MCF 10A (cell line): ENCODE measurements at regions of chr19 and their contacts with region 1.

Region 1: GRCh38 chr19:24033301-24033962 is 53.6 kb upstream of the ZNF254 start:
- DNase-seq: peak; percentile 95
- H3K4me3 Mint-ChIP-seq: peak overlapping the region; percentile 94
- H3K27ac Mint-ChIP-seq: peak overlapping the region; percentile 97
- H3K4me1 Mint-ChIP-seq: peaks cover 8% of the 10 kb centered on the region
- H3K27me3 Mint-ChIP-seq: no peaks in the 10 kb centered on the region
- CTCF ChIP-seq: no peak

Region 2: GRCh38 chr19:23686621-23687423 is 346.6 kb before region 1 on chr19 and contains the start of gene ZNF675:
- CTCF ChIA-PET with region 1: no interaction called
- POLR2A ChIA-PET with region 1: interaction called, 13 read pairs
- intact Hi-C with region 1: no loop called
- DNase-seq: peak; percentile 96
- H3K4me3 Mint-ChIP-seq: peak within 1 kb of the TSS; percentile 98
- H3K27ac Mint-ChIP-seq: peak within 1 kb of the TSS; percentile 97
- H3K4me1 Mint-ChIP-seq: peaks cover 6% of the 10 kb centered on the region
- H3K27me3 Mint-ChIP-seq: no peaks in the 10 kb centered on the region
- CTCF ChIP-seq: no peak
- total RNA-seq, gene ZNF675: 7.9 and 8.8 TPM in 2 replicates

Region 3: GRCh38 chr19:23699082-23699761 is 334.2 kb before region 1 on chr19:
- CTCF ChIA-PET with region 1: no interaction called
- POLR2A ChIA-PET with region 1: interaction called, 13 read pairs
- intact Hi-C with region 1: no loop called
- DNase-seq: peak; percentile 38
- H3K4me3 Mint-ChIP-seq: peak overlapping the region; percentile 53
- H3K27ac Mint-ChIP-seq: peak overlapping the region; percentile 35
- H3K4me1 Mint-ChIP-seq: peaks cover 12% of the 10 kb centered on the region
- H3K27me3 Mint-ChIP-seq: no peaks in the 10 kb centered on the region
- CTCF ChIP-seq: no peak

Region 4: DNA sequence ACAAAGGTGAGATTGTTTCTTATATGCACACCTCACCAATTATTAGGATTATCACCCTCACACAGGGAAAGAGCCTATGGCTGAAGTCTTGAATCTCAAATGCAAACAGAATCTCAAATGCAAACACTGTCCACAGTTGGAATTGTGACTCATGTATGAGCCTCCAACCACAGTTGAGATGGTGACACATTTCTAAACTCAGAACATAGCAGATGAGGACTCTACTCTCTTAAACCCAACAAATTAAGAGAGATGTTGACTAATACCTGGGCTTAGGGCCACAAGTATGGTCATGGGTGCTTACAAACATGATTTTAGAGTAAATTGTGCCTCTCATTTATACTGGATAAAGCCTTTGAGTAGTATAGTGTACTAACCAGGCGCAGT is 21.1 kb after region 1 on chr19:
- CTCF ChIA-PET with region 1: no interaction called
- POLR2A ChIA-PET with region 1: interaction called, 19 read pairs
- intact Hi-C with region 1: loop called (anchors 1 kb)
- DNase-seq: peak; percentile 88
- H3K4me3 Mint-ChIP-seq: no peak overlapping the region
- H3K27ac Mint-ChIP-seq: peak overlapping the region; percentile 33
- H3K4me1 Mint-ChIP-seq: peaks cover 32% of the 10 kb centered on the region
- H3K27me3 Mint-ChIP-seq: no peaks in the 10 kb centered on the region
- CTCF ChIP-seq: no peak

Region 5: GRCh38 chr19:24086974-24087595 is 53.7 kb after region 1 on chr19 and contains the start of gene ZNF254:
- CTCF ChIA-PET with region 1: interaction called, 3 read pairs
- POLR2A ChIA-PET with region 1: interaction called, 18 read pairs
- intact Hi-C with region 1: no loop called
- DNase-seq: peak; percentile 87
- H3K4me3 Mint-ChIP-seq: peak within 1 kb of the TSS; percentile 80
- H3K27ac Mint-ChIP-seq: peak within 1 kb of the TSS; percentile 97
- H3K4me1 Mint-ChIP-seq: no peaks in the 10 kb centered on the region
- H3K27me3 Mint-ChIP-seq: no peaks in the 10 kb centered on the region
- CTCF ChIP-seq: no peak
- total RNA-seq, gene ZNF254: 5.3 and 5.6 TPM in 2 replicates

Region 6: DNA sequence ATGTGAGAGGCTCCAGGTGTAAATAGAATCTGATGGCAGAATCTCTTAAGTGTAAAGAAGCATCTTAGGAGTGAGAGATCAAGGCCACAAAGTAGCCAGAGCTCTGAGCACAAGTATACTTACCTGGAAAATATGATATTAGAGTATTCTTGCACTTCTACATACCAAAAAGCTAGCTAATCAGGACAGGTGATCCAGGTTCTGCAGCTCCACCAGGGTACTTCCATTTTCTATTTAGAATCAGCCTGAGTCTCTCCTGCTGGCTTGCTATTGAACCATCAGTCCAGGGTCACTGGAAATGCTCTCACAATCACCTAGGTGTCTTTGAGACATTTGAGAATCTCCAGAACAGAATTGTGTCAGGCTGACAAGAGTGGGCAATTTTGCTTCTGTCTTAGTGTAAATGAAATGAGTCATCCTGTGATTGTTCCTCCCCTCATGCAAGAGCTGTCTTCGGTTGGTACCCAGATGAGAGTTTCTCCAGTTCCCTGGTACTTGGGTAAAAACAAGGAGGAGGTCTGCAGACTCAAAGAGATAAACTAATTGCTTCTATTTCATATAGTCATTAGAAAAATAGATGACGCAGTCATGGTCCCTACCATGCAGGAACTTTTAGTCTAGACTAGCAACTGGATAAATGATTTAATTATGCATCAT is 68.2 kb after region 1 on chr19:
- CTCF ChIA-PET with region 1: no interaction called
- POLR2A ChIA-PET with region 1: no interaction called
- intact Hi-C with region 1: no loop called
- DNase-seq: no peak
- H3K4me3 Mint-ChIP-seq: no peak overlapping the region
- H3K27ac Mint-ChIP-seq: no peak overlapping the region
- H3K4me1 Mint-ChIP-seq: no peaks in the 10 kb centered on the region
- H3K27me3 Mint-ChIP-seq: no peaks in the 10 kb centered on the region
- CTCF ChIP-seq: no peak